Naive thymus-derived CD4-positive, alpha-beta T cell (primary cell): ENCODE measurements at regions of chr1 and their contacts with region 1.

Region 1: GRCh38 chr1:169601093-169601881 is 15.0 kb upstream of the F5 start:
- DNase-seq: peak in 6 of 9 donors; percentile 17 to 51 (median 36)
- ATAC-seq: no peak
- H3K4me3 ChIP-seq: no peak overlapping the region
- H3K4me3 Mint-ChIP-seq: peak overlapping the region in 6 of 10 donors; percentile 38 to 79 (median 54)
- H3K27ac ChIP-seq: peak overlapping the region; percentile 61
- H3K27ac Mint-ChIP-seq: peak overlapping the region; percentile 47 to 96 (median 89)
- H3K4me1 ChIP-seq: peaks cover 17 to 49% of the 10 kb centered on the region in 2 donors
- H3K4me1 Mint-ChIP-seq: peaks cover 43 to 58% (median 55%) of the 10 kb centered on the region in 7 donors
- H3K27me3 ChIP-seq: no peaks in the 10 kb centered on the region
- H3K27me3 Mint-ChIP-seq: peaks cover 0 to 2% (median 0%) of the 10 kb centered on the region in 5 donors

Region 2: GRCh38 chr1:167605576-167605975 is 1995.7 kb before region 1 on chr1:
- CTCF ChIA-PET with region 1: no interaction called
- POLR2A ChIA-PET with region 1: no interaction called
- intact Hi-C with region 1: no loop called
- DNase-seq: no peak
- ATAC-seq: no peak
- H3K4me3 ChIP-seq: no peak overlapping the region
- H3K4me3 Mint-ChIP-seq: peak overlapping the region in 1 of 10 donors; percentile 21
- H3K27ac ChIP-seq: no peak overlapping the region
- H3K27ac Mint-ChIP-seq: peak overlapping the region in 2 of 9 donors; percentile 42 to 56
- H3K4me1 ChIP-seq: peaks cover 23 to 28% of the 10 kb centered on the region in 2 donors
- H3K4me1 Mint-ChIP-seq: peaks cover 20 to 43% (median 35%) of the 10 kb centered on the region in 7 donors
- H3K27me3 ChIP-seq: no peaks in the 10 kb centered on the region
- H3K27me3 Mint-ChIP-seq: peaks cover 0 to 4% (median 0%) of the 10 kb centered on the region in 5 donors

Region 3: GRCh38 chr1:169511316-169512028 is 89.8 kb before region 1 on chr1:
- CTCF ChIA-PET with region 1: no interaction called
- POLR2A ChIA-PET with region 1: no interaction called
- intact Hi-C with region 1: no loop called
- DNase-seq: no peak
- ATAC-seq: no peak
- H3K4me3 ChIP-seq: no peak overlapping the region
- H3K4me3 Mint-ChIP-seq: no peak overlapping the region
- H3K27ac ChIP-seq: no peak overlapping the region
- H3K27ac Mint-ChIP-seq: no peak overlapping the region
- H3K4me1 ChIP-seq: peaks cover 0 to 9% of the 10 kb centered on the region in 2 donors
- H3K4me1 Mint-ChIP-seq: peaks cover 0 to 19% (median 12%) of the 10 kb centered on the region in 7 donors
- H3K27me3 ChIP-seq: no peaks in the 10 kb centered on the region
- H3K27me3 Mint-ChIP-seq: no peaks in the 10 kb centered on the region

Region 4: GRCh38 chr1:169546087-169546995 is 54.9 kb before region 1 on chr1:
- CTCF ChIA-PET with region 1: interaction called, 32 read pairs
- POLR2A ChIA-PET with region 1: interaction called, 3 read pairs
- intact Hi-C with region 1: loop called in 1 of 2 experiments (anchors 1 kb)
- DNase-seq: peak in 7 of 9 donors; percentile 40 to 73 (median 68)
- ATAC-seq: peak; percentile 92
- H3K4me3 ChIP-seq: no peak overlapping the region
- H3K4me3 Mint-ChIP-seq: no peak overlapping the region
- H3K27ac ChIP-seq: no peak overlapping the region
- H3K27ac Mint-ChIP-seq: peak overlapping the region in 1 of 9 donors; percentile 7
- H3K4me1 ChIP-seq: no peaks in the 10 kb centered on the region
- H3K4me1 Mint-ChIP-seq: peaks cover 0 to 14% (median 0%) of the 10 kb centered on the region in 7 donors
- H3K27me3 ChIP-seq: no peaks in the 10 kb centered on the region
- H3K27me3 Mint-ChIP-seq: no peaks in the 10 kb centered on the region

Region 5: DNA sequence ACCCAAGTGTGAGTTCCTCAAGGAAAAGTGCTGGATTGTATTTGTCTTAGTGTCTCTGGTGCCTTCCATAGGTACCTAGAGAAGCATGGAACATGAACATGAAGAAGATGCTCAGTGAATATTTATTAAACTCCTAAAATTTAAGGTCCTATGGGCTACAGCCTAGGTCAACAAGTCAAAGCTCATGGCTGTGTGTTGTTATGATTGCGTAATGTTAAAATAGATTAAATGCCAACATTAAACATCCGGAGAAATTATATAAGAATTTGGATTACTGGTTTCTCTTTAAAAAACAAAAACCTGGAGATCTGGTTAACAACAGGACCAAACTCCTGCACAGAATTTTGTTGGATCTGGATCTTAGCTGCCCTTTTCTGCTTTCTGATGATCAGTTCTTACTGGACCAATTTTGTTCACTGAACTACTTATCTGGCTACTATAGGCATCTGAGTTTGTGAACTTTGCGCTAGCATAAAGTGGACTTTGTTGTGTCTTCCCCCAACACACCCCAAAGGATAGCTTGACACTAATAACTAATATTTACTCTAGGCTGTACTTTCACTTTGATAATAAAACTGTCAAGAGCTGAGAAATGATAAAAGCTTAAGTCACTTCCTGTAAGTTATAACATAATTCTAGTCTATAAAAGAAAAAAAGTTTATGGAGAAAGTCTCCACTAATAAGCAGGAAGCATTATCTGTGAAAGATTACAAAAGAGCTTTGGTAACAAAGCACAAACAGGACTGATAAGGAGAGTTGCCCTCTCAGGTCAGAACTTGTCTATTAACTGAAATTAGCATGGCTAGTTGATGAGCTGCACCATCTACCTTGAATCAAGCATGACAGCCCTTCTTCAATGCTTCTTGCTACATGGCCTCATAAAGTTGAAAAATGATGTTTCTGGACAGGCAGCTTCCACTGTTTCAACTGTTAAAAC is 35.7 kb before region 1 on chr1:
- CTCF ChIA-PET with region 1: no interaction called
- POLR2A ChIA-PET with region 1: no interaction called
- intact Hi-C with region 1: no loop called
- DNase-seq: no peak
- ATAC-seq: no peak
- H3K4me3 ChIP-seq: no peak overlapping the region
- H3K4me3 Mint-ChIP-seq: no peak overlapping the region
- H3K27ac ChIP-seq: no peak overlapping the region
- H3K27ac Mint-ChIP-seq: peak overlapping the region in 2 of 9 donors; percentile 5 to 38
- H3K4me1 ChIP-seq: peaks cover 0 to 8% of the 10 kb centered on the region in 2 donors
- H3K4me1 Mint-ChIP-seq: peaks cover 3 to 15% (median 10%) of the 10 kb centered on the region in 7 donors
- H3K27me3 ChIP-seq: no peaks in the 10 kb centered on the region
- H3K27me3 Mint-ChIP-seq: no peaks in the 10 kb centered on the region

Region 6: GRCh38 chr1:169624122-169624521 is 22.8 kb after region 1 on chr1:
- CTCF ChIA-PET with region 1: interaction called, 13 read pairs
- POLR2A ChIA-PET with region 1: interaction called, 15 read pairs
- intact Hi-C with region 1: loop called in 1 of 2 experiments (anchors 2 kb)
- DNase-seq: no peak
- ATAC-seq: no peak
- H3K4me3 ChIP-seq: no peak overlapping the region
- H3K4me3 Mint-ChIP-seq: peak overlapping the region in 7 of 10 donors; percentile 7 to 85 (median 52)
- H3K27ac ChIP-seq: no peak overlapping the region
- H3K27ac Mint-ChIP-seq: peak overlapping the region in 8 of 9 donors; percentile 29 to 86 (median 80)
- H3K4me1 ChIP-seq: peaks cover 7 to 64% of the 10 kb centered on the region in 2 donors
- H3K4me1 Mint-ChIP-seq: peaks cover 42 to 86% (median 76%) of the 10 kb centered on the region in 7 donors
- H3K27me3 ChIP-seq: no peaks in the 10 kb centered on the region
- H3K27me3 Mint-ChIP-seq: no peaks in the 10 kb centered on the region

Region 7: DNA sequence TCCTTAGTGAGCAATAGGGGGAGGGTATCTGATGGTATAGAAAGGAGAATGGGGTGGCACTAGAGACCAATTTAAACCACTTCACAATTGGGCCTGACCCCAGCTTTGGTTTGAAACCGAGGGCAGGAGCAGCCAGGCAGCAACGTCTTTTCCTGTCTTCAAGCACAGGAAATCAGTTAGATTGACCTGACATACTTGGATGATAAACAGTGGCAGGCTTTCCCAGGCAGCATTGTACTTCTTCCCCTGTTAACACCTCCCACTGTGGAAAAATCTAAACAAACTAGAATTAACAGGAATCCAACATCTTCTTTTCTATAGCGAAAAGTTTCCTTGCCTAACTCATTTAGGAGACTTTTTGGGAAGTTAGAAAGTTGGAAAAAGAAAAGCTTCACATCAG is 69.5 kb after region 1 on chr1:
- CTCF ChIA-PET with region 1: interaction called, 7 read pairs
- POLR2A ChIA-PET with region 1: interaction called, 8 read pairs
- intact Hi-C with region 1: loop called in 1 of 2 experiments (anchors 1 kb)
- DNase-seq: no peak
- ATAC-seq: no peak
- H3K4me3 ChIP-seq: no peak overlapping the region
- H3K4me3 Mint-ChIP-seq: peak overlapping the region in 8 of 10 donors; percentile 8 to 67 (median 38)
- H3K27ac ChIP-seq: no peak overlapping the region
- H3K27ac Mint-ChIP-seq: peak overlapping the region; percentile 56 to 94 (median 81)
- H3K4me1 ChIP-seq: peaks cover 7 to 32% of the 10 kb centered on the region in 2 donors
- H3K4me1 Mint-ChIP-seq: peaks cover 23 to 68% (median 65%) of the 10 kb centered on the region in 7 donors
- H3K27me3 ChIP-seq: no peaks in the 10 kb centered on the region
- H3K27me3 Mint-ChIP-seq: no peaks in the 10 kb centered on the region

Region 8: GRCh38 chr1:169689395-169689794 is 88.1 kb after region 1 on chr1:
- CTCF ChIA-PET with region 1: interaction called, 229 read pairs
- POLR2A ChIA-PET with region 1: interaction called, 159 read pairs
- intact Hi-C with region 1: loop called (anchors 1 kb)
- DNase-seq: no peak
- ATAC-seq: no peak
- H3K4me3 ChIP-seq: no peak overlapping the region
- H3K4me3 Mint-ChIP-seq: peak overlapping the region in 9 of 10 donors; percentile 26 to 79 (median 40)
- H3K27ac ChIP-seq: peak overlapping the region; percentile 70
- H3K27ac Mint-ChIP-seq: peak overlapping the region in 2 of 9 donors; percentile 53 to 96
- H3K4me1 ChIP-seq: peaks cover 54 to 73% of the 10 kb centered on the region in 2 donors
- H3K4me1 Mint-ChIP-seq: peaks cover 0 to 55% (median 23%) of the 10 kb centered on the region in 7 donors
- H3K27me3 ChIP-seq: no peaks in the 10 kb centered on the region
- H3K27me3 Mint-ChIP-seq: no peaks in the 10 kb centered on the region

Region 9: GRCh38 chr1:169794530-169795416 is 193.5 kb after region 1 on chr1 and contains the start of gene METTL18:
- CTCF ChIA-PET with region 1: interaction called, 3 read pairs
- POLR2A ChIA-PET with region 1: interaction called, 6 read pairs
- intact Hi-C with region 1: loop called (anchors 2 kb)
- DNase-seq: peak; percentile 72 to 96 (median 92)
- ATAC-seq: peak; percentile 100
- H3K4me3 ChIP-seq: peak within 1 kb of the TSS; percentile 98
- H3K4me3 Mint-ChIP-seq: peak within 1 kb of the TSS; percentile 90 to 100 (median 100)
- H3K27ac ChIP-seq: peak within 1 kb of the TSS; percentile 94
- H3K27ac Mint-ChIP-seq: peak within 1 kb of the TSS; percentile 97 to 100 (median 99)
- H3K4me1 ChIP-seq: peaks cover 10 to 28% of the 10 kb centered on the region in 2 donors
- H3K4me1 Mint-ChIP-seq: peaks cover 26 to 60% (median 56%) of the 10 kb centered on the region in 7 donors
- H3K27me3 ChIP-seq: no peaks in the 10 kb centered on the region
- H3K27me3 Mint-ChIP-seq: no peaks in the 10 kb centered on the region
- total RNA-seq, gene METTL18: 4.9 to 21.1 (median 13.4) TPM